GM18951 (cell line): ENCODE measurements at regions of chr17 and their contacts with region 1.

Region 1: GRCh38 chr17:1516388-1517161 is at the start of gene INPP5K:
- POLR2A ChIP-seq: peak; percentile 92

Region 2: DNA sequence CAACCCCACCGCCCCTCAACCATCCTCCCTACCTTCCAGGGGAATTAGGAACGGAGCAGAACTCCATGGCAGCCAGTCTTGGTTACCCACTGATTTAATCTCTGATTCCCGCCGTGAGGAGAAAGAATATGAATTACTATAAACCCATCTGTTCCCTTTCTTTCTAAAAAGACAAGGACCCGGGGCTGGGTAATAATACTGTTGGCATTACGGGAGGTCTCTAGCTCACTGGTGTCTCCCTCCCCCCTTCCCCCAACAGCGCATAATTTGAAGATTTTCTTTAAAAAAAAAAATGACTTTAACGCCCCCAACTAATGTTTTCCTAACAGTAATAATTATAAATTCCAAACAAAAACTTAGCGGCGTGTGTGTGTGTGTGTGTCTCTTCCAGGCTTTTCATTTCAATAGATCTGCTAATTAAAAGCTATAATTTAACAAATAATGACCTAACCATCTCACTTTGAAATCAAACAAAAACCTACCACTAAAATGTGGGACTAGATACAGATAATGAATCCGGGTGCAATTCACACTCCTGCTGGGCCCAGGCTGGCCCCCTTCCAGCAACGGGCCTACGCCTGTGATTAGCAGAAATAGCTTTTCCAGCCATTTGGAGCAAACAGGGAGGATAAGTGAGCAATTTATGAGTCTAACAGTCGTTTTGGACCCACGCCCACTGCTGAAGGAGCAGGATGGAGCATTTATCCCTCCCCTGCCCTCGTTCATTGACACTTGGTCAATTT is 264.5 kb before region 1 on chr17:
- in situ Hi-C with region 1: loop called (anchors 10 kb)
- POLR2A ChIP-seq: no peak

Region 3: DNA sequence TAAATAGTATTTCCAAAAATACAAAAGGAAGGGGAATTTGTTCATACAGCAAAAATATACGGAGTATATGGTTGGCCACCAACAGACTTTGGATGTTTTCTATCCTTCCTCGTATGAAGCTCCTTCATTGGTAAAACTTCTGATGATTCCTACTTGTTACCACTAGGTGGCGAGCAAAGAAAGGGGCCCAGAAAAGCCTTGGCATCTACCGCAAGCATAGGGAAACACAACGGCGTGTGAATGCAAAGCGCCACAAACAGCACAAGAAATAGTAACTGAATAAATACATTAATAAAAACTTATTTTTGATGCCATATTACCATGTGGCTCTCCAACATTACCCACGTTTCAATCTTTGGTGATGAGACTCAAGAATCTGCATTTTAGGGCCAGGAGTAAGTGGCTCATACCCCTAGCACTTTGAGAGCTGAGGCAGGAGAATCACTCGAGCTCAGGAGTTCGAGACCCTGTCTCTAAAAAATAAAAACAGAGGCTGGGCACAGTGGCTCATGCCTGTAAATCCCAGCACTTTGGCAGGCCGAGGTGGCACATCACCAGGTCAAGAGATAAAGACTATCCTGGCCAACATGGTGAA is 151.0 kb before region 1 on chr17:
- in situ Hi-C with region 1: loop called (anchors 25 kb)
- POLR2A ChIP-seq: no peak

Region 4: DNA sequence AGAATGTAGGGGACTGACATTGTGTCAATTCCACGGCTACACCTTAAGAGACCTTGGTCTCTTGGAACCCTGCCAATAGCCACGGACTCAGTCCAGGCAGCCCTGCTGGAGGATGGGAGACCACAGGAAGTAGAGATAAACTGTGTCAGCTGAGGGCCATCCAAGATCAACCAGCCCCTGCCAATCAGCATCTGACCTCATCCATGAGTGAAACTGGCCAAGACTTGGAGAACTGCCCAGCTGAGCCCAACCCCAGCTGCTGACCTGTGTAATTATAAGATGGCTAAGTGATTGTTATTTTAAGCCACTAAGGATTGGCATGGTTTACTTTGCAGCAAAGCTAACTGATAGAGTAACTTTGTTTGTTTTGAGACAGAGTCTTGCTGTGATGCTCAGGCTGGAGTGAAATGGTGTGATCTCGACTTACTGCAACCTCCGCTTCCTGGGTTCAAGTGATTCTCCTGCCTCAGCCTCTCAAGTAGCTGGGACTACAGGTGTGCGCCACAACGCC is 103.2 kb before region 1 on chr17:
- in situ Hi-C with region 1: no loop called
- POLR2A ChIP-seq: no peak

Region 5: GRCh38 chr17:1590031-1590748 is 73.6 kb after region 1 on chr17:
- in situ Hi-C with region 1: no loop called
- POLR2A ChIP-seq: no peak

Region 6: GRCh38 chr17:1999557-2000251 is 483.1 kb after region 1 on chr17:
- in situ Hi-C with region 1: no loop called
- POLR2A ChIP-seq: no peak

Region 7: DNA sequence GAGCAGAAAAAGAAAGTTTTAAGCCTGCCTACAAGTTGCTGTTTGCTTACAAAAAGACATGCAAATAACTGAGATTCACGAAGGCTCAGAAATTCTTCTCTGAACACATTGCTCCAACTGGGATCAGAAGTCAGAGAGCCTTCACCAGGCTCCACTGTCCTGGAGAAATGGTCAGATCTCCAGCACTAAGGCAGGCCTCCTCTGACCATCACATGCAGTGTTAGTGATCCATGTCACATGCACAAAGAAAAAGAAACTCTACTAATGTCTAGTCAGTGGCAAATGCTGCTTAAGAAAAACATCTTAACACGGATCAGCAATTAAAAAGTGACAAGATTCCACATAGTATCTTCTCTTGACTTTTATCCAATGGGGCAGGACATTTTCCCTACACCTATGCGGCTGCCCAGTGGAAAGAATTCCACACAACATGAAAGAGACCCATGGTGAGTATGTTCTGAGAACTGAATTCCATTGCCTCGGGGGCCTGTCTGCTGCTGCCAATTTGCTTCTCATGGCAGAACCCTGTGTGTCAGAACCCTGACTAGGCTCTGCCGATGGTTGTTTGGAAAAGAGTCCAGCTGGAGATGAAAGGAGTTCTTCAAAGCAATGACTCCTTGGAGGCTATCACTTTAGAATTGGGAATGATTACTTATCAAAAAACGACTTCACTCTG is 634.9 kb after region 1 on chr17:
- in situ Hi-C with region 1: no loop called
- POLR2A ChIP-seq: no peak